Ovary (tissue), 10 donors: ENCODE measurements at regions of chr19 and their contacts with region 1.

Region 1: DNA sequence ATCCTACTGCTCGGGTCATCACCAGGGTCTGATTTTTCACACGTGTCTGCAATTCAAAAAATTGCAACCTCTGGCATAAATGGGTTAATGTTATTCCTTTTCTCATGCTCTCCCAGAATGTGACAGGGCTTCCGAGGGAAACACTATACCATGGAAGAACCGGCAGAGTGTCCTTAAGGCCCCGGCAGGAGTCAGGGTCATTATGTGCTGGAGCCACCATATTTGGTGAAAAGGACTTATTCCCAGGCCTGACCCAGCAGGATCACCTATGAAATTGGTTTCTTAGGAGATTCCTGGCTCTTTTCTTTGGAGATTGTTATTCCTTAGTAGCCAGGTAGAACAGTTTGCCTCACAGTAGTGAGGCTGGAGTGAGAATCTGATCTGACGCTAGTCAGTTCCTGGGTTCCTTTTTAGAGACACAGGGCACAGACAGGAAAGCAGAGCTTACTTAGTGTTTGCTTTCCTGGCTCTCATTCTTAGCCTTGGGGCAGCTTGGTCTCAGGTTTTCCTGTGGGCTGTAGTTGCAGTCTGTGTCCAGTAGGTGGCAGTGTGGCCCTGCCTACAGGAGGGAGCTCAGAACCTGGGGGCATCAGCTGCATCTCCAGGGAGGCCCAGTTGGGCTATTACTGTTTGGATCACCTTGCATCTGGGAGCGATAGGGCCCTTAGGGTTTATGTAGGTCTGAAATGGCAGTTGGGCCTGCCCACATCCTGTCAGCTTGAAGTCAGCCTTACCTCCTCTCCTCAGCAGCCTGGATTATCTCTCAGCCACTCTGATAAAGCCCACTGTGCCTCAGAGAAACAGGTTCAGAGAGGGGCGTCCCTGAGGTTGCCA is 12.4 kb downstream of the SNRNP70 start:
- DNase-seq: peak; percentile 50 to 76 (median 71)
- H3K4me3 ChIP-seq: no peak overlapping the region
- H3K27ac ChIP-seq: no peak overlapping the region
- H3K4me1 ChIP-seq: no peaks in the 10 kb centered on the region
- H3K27me3 ChIP-seq: no peaks in the 10 kb centered on the region
- CTCF ChIP-seq: peak; percentile 89 to 97 (median 94)
- EP300 ChIP-seq: no peak
- POLR2A ChIP-seq: no peak

Region 2: DNA sequence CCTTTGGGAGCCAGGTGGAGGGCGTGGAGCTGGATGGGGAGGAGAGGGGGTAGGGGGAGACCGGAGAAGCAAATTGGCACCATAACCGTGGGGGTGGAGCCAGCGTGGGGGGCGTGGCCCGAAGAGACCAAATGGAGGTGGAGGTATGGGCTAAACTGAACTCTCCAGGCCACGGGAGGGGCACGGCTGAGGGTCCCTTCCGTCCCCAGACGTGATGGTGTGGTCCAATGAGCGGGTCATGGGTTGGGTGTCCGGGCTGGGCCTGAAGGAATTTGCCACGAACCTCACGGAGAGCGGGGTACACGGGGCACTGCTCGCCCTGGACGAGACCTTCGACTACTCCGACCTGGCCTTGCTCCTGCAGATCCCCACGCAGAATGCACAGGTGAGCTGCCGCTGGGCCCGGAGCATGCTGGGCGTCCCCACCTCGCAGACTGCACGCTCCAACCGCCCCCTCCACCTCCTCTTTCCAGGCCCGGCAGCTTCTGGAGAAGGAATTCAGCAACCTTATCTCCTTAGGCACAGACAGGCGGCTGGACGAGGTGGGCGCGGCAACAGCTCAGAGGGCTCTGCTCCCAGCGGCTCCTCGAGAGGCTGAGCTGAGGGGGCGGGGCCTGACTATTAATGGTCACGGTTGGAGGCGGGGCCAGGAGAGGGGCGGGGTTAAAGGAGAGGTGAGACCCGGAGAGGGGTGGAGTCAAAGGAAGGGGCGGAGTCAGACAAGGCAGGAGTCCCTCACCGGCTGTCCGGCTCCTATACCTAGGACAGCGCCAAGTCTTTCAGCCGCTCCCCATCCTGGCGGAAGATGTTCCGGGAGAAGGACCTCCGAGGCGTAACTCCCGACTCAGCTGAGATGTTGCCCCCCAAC is 51.3 kb after region 1 on chr19:
- intact Hi-C with region 1: loop called in 3 of 4 experiments (anchors 5 to 10 kb)
- DNase-seq: peak; percentile 97 to 99 (median 99)
- H3K4me3 ChIP-seq: peak overlapping the region; percentile 42
- H3K27ac ChIP-seq: peak overlapping the region in 1 of 2 donors; percentile 33
- H3K4me1 ChIP-seq: peaks cover 4% of the 10 kb centered on the region
- H3K27me3 ChIP-seq: no peaks in the 10 kb centered on the region
- CTCF ChIP-seq: no peak
- EP300 ChIP-seq: no peak
- POLR2A ChIP-seq: no peak

Region 3: DNA sequence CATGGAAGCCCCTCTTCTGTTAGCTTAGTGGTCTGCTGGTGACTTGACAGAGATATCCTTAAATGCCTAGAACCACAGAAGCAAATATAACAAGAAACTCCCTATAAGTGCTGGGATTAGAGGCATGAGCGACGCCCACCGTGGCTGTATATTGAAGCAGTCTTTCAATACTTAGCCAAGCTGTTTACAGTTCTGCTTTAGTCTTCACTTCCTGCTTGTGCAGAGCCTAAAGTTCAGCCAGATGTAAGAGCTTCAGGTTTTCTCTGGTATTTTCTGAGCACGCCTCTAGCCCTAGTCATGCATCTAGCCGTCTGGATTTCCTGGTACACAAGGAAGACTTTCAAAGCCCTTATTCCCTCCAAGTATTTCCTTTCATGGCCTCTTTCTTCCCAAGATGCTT is 88.4 kb after region 1 on chr19:
- intact Hi-C with region 1: no loop called
- DNase-seq: no peak
- H3K4me3 ChIP-seq: no peak overlapping the region
- H3K27ac ChIP-seq: no peak overlapping the region
- H3K4me1 ChIP-seq: no peaks in the 10 kb centered on the region
- H3K27me3 ChIP-seq: no peaks in the 10 kb centered on the region
- CTCF ChIP-seq: no peak
- EP300 ChIP-seq: no peak
- POLR2A ChIP-seq: no peak

Region 4: DNA sequence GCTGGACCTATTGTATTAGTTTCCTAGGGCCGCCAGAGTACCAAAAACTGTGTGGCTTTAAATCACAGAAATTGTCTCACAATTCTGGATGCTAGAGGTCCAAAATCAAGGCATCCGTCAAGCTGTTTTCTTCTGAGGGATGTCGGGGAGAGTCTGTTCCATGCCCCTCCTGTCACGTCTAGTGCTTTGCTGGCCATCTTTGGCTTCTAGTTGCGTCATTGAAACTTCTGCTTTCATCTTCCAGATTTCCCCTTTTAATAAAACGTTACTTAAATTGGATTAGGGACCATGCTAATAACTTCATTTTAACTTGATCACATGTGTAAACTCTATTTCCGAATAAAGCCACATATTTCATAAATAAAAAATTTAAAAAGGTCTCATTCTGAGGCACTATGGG is 107.4 kb after region 1 on chr19:
- intact Hi-C with region 1: loop called in 3 of 4 experiments (anchors 5 to 10 kb)
- DNase-seq: no peak
- H3K4me3 ChIP-seq: no peak overlapping the region
- H3K27ac ChIP-seq: no peak overlapping the region
- H3K4me1 ChIP-seq: peaks cover 3% of the 10 kb centered on the region
- H3K27me3 ChIP-seq: no peaks in the 10 kb centered on the region
- CTCF ChIP-seq: no peak
- EP300 ChIP-seq: no peak
- POLR2A ChIP-seq: no peak

Region 5: GRCh38 chr19:49210108-49210900 is 112.6 kb after region 1 on chr19:
- intact Hi-C with region 1: loop called in 3 of 4 experiments (anchors 5 to 10 kb)
- DNase-seq: peak; percentile 25 to 70 (median 61)
- H3K4me3 ChIP-seq: peak overlapping the region; percentile 23
- H3K27ac ChIP-seq: no peak overlapping the region
- H3K4me1 ChIP-seq: peaks cover 6% of the 10 kb centered on the region
- H3K27me3 ChIP-seq: no peaks in the 10 kb centered on the region
- CTCF ChIP-seq: no peak
- EP300 ChIP-seq: no peak
- POLR2A ChIP-seq: no peak